Adrenal gland (tissue), 19 donors: ENCODE measurements at regions of chr17 and their contacts with region 1.

Region 1: GRCh38 chr17:28041068-28041843 is 1.2 kb upstream of the NLK start:
- DNase-seq: peak; percentile 99 to 100 (median 100)
- H3K4me3 ChIP-seq: peak overlapping the region in 2 of 4 donors; percentile 88 to 97
- H3K27ac ChIP-seq: peak overlapping the region; percentile 1 to 95 (median 88)
- H3K4me1 ChIP-seq: peaks cover 12 to 40% of the 10 kb centered on the region in 2 donors
- H3K27me3 ChIP-seq: no peaks in the 10 kb centered on the region
- CTCF ChIP-seq: no peak
- POLR2A ChIP-seq: peak in 1 of 2 donors; percentile 94

Region 2: DNA sequence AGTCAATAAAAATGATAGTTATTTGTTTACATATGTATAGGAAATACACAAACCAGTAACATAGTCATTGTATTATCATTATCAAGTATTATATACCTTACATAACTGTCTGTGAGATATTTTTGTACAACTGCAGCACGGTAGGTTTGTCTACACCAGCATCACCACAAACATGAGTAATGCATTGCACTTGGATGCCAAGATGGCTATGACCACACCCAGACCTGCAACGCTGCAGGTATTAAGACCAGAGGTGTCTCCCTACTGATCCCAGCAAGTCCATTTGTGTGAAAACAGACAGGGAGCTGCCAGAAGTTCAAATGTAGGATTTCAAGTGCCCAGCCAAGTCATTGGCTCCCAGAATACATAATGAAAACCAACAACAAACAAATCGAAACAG is 206.7 kb before region 1 on chr17:
- intact Hi-C with region 1: no loop called
- DNase-seq: no peak
- H3K4me3 ChIP-seq: no peak overlapping the region
- H3K27ac ChIP-seq: no peak overlapping the region
- H3K4me1 ChIP-seq: no peaks in the 10 kb centered on the region
- H3K27me3 ChIP-seq: no peaks in the 10 kb centered on the region
- CTCF ChIP-seq: no peak
- POLR2A ChIP-seq: no peak

Region 3: DNA sequence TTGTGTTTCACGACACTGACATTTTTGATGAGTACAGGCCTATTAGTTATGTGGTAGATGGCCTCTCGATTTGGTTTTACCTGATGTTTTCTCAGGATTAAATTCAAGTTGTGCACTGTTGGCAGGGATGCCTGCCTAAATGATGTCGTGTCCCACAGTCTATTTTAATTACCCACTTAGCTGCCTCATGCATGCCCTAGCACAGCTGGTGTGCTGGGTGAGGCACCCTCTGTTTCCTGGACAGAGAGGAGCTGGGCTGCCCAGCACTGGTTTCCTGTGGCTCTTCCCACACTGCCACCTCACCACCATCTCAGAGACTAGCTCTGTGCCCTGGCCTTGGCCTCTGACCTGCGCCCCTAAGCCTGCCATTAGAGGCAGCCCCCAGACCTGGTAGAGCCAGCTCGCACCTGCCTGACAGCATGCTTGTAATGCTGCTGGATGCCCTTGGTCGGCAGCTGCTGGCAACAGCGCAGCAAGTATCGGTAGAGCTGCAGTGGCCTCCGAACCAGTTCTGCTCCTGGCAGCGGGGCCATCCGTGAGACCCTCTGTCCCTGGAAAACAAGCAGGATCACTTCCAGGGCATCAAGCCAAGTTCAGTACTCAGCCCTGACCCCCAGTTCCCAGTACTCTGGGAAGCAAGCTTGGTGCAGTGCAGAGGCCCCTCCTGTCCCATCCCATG is 159.0 kb before region 1 on chr17:
- intact Hi-C with region 1: no loop called
- DNase-seq: peak in 1 of 7 donors; percentile 50
- H3K4me3 ChIP-seq: no peak overlapping the region
- H3K27ac ChIP-seq: no peak overlapping the region
- H3K4me1 ChIP-seq: no peaks in the 10 kb centered on the region
- H3K27me3 ChIP-seq: no peaks in the 10 kb centered on the region
- CTCF ChIP-seq: no peak
- POLR2A ChIP-seq: no peak

Region 4: GRCh38 chr17:27892866-27893769 is 148.1 kb before region 1 on chr17 and contains the start of gene LYRM9:
- intact Hi-C with region 1: loop called in 1 of 2 experiments (anchors 10 kb)
- DNase-seq: peak; percentile 89 to 94 (median 91)
- H3K4me3 ChIP-seq: peak within 1 kb of the TSS; percentile 52 to 92 (median 86)
- H3K27ac ChIP-seq: peak within 1 kb of the TSS; percentile 71 to 97 (median 95)
- H3K4me1 ChIP-seq: peaks cover 24 to 46% of the 10 kb centered on the region in 2 donors
- H3K27me3 ChIP-seq: no peaks in the 10 kb centered on the region
- CTCF ChIP-seq: peak; percentile 45 to 98 (median 84)
- POLR2A ChIP-seq: peak; percentile 61 to 81
- total RNA-seq, gene LYRM9: 24.8 to 116 (median 35.7) TPM

Region 5: GRCh38 chr17:28105501-28105900 is 64.2 kb after region 1 on chr17:
- intact Hi-C with region 1: loop called in 1 of 2 experiments (anchors 10 kb)
- DNase-seq: no peak
- H3K4me3 ChIP-seq: no peak overlapping the region
- H3K27ac ChIP-seq: no peak overlapping the region
- H3K4me1 ChIP-seq: peaks cover 0 to 24% of the 10 kb centered on the region in 2 donors
- H3K27me3 ChIP-seq: no peaks in the 10 kb centered on the region
- CTCF ChIP-seq: no peak
- POLR2A ChIP-seq: no peak